Left cardiac atrium (tissue), 4 donors: ENCODE measurements at regions of chr3 and their contacts with region 1.

Region 1: GRCh38 chr3:136653628-136654027 is 98.5 kb downstream of the STAG1 start:
- DNase-seq: no peak
- ATAC-seq: no peak

Region 2: GRCh38 chr3:136152176-136152843 is 501.3 kb before region 1 on chr3:
- intact Hi-C with region 1: no loop called
- DNase-seq: no peak
- ATAC-seq: no peak

Region 3: GRCh38 chr3:136694321-136694720 is 40.7 kb after region 1 on chr3:
- intact Hi-C with region 1: loop called in 1 of 2 experiments (anchors 1 kb)
- DNase-seq: no peak
- ATAC-seq: no peak